ENCODE measurements at regions of chr17 and their contacts with region 1.

Region 1: GRCh38 chr17:15999439-16000350 is at the starts of genes TTC19 and ZSWIM7:
- DNase-seq: peak; percentile 96
- ATAC-seq: peak; percentile 85
- H3K4me3 ChIP-seq: peak within 1 kb of the TSS; percentile 61 to 89 (median 72)
- H3K4me3 Mint-ChIP-seq: peak within 1 kb of the TSS; percentile 99
- H3K27ac ChIP-seq: peak within 1 kb of the TSS; percentile 73 to 85
- H3K27ac Mint-ChIP-seq: peak within 1 kb of the TSS; percentile 97
- H3K4me1 ChIP-seq: peaks cover 22 to 26% of the 10 kb centered on the region in 2 donors
- H3K4me1 Mint-ChIP-seq: peaks cover 32% of the 10 kb centered on the region
- H3K27me3 ChIP-seq: no peaks in the 10 kb centered on the region
- H3K27me3 Mint-ChIP-seq: no peaks in the 10 kb centered on the region
- CTCF ChIP-seq: no peak
- total RNA-seq, gene TTC19: 38.5 and 39.9 TPM in 2 replicates
- total RNA-seq, gene ZSWIM7: 25.1 and 27.7 TPM in 2 replicates

Region 2: GRCh38 chr17:15257258-15257788 is 742.4 kb before region 1 on chr17:
- CTCF ChIA-PET with region 1: interaction called, 15 read pairs
- POLR2A ChIA-PET with region 1: no interaction called
- intact Hi-C with region 1: no loop called
- DNase-seq: peak; percentile 61
- ATAC-seq: peak; percentile 45
- H3K4me3 ChIP-seq: no peak overlapping the region
- H3K4me3 Mint-ChIP-seq: no peak overlapping the region
- H3K27ac ChIP-seq: no peak overlapping the region
- H3K27ac Mint-ChIP-seq: peak overlapping the region; percentile 34
- H3K4me1 ChIP-seq: peaks cover 12 to 16% of the 10 kb centered on the region in 2 donors
- H3K4me1 Mint-ChIP-seq: peaks cover 18% of the 10 kb centered on the region
- H3K27me3 ChIP-seq: peaks cover 0 to 39% (median 24%) of the 10 kb centered on the region in 4 experiments
- H3K27me3 Mint-ChIP-seq: peaks cover 61% of the 10 kb centered on the region
- CTCF ChIP-seq: peak; percentile 79

Region 3: DNA sequence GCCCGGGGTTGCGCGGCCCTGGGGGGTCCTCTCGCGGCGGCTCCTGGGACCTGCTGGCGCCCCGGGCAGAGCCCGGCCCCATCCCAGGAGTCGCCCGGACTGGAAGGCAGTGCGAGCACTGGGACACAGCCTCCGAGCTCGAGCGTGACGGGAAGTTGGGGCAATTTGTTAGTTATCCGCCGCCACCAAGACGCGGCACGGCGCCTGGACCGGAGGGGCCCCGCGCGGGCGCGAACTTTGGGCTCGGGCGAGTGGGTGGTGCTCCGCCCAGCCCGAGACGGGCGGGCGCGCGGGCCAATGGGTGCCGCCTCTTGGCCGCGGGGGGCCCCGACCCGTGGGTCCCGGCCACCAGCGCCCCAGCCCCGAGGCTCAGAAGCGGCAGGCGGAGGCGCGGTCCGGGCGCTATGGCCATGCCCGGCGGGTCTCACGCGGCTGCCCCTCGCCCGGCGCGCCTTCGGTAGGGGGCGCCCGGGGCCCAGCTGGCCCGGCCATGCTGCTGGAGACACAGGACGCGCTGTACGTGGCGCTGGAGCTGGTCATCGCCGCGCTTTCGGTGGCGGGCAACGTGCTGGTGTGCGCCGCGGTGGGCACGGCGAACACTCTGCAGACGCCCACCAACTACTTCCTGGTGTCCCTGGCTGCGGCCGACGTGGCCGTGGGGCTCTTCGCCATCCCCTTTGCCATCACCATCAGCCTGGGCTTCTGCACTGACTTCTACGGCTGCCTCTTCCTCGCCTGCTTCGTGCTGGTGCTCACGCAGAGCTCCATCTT is 54.8 kb before region 1 on chr17 and contains the start of gene ADORA2B:
- CTCF ChIA-PET with region 1: interaction called, 14 read pairs
- POLR2A ChIA-PET with region 1: interaction called, 3 read pairs
- intact Hi-C with region 1: no loop called
- DNase-seq: peak; percentile 38
- ATAC-seq: peak; percentile 70
- H3K4me3 ChIP-seq: peak within 1 kb of the TSS in 4 of 5 experiments; percentile 15 to 56 (median 46)
- H3K4me3 Mint-ChIP-seq: peak within 1 kb of the TSS; percentile 89
- H3K27ac ChIP-seq: no peak within 1 kb of the TSS
- H3K27ac Mint-ChIP-seq: no peak within 1 kb of the TSS
- H3K4me1 ChIP-seq: peaks cover 15 to 18% of the 10 kb centered on the region in 2 donors
- H3K4me1 Mint-ChIP-seq: peaks cover 17% of the 10 kb centered on the region
- H3K27me3 ChIP-seq: peaks cover 0 to 46% (median 14%) of the 10 kb centered on the region in 4 experiments
- H3K27me3 Mint-ChIP-seq: peaks cover 42% of the 10 kb centered on the region
- CTCF ChIP-seq: no peak
- total RNA-seq, gene ADORA2B: not detected in 2 replicates

Region 4: GRCh38 chr17:15955793-15956541 is 43.7 kb before region 1 on chr17:
- CTCF ChIA-PET with region 1: no interaction called
- POLR2A ChIA-PET with region 1: no interaction called
- intact Hi-C with region 1: no loop called
- DNase-seq: no peak
- ATAC-seq: no peak
- H3K4me3 ChIP-seq: no peak overlapping the region
- H3K4me3 Mint-ChIP-seq: no peak overlapping the region
- H3K27ac ChIP-seq: no peak overlapping the region
- H3K27ac Mint-ChIP-seq: no peak overlapping the region
- H3K4me1 ChIP-seq: no peaks in the 10 kb centered on the region
- H3K4me1 Mint-ChIP-seq: peaks cover 5% of the 10 kb centered on the region
- H3K27me3 ChIP-seq: no peaks in the 10 kb centered on the region
- H3K27me3 Mint-ChIP-seq: peaks cover 28% of the 10 kb centered on the region
- CTCF ChIP-seq: no peak

Region 5: GRCh38 chr17:15981208-15981607 is 18.5 kb before region 1 on chr17:
- CTCF ChIA-PET with region 1: no interaction called
- POLR2A ChIA-PET with region 1: no interaction called
- intact Hi-C with region 1: no loop called
- DNase-seq: no peak
- ATAC-seq: peak; percentile 60
- H3K4me3 ChIP-seq: no peak overlapping the region
- H3K4me3 Mint-ChIP-seq: no peak overlapping the region
- H3K27ac ChIP-seq: no peak overlapping the region
- H3K27ac Mint-ChIP-seq: no peak overlapping the region
- H3K4me1 ChIP-seq: peaks cover 0 to 6% of the 10 kb centered on the region in 2 donors
- H3K4me1 Mint-ChIP-seq: peaks cover 10% of the 10 kb centered on the region
- H3K27me3 ChIP-seq: no peaks in the 10 kb centered on the region
- H3K27me3 Mint-ChIP-seq: no peaks in the 10 kb centered on the region
- CTCF ChIP-seq: no peak

Measured in B cell (primary cell).